ENCODE measurements at regions of chr2 and their contacts with region 1.

Region 1: DNA sequence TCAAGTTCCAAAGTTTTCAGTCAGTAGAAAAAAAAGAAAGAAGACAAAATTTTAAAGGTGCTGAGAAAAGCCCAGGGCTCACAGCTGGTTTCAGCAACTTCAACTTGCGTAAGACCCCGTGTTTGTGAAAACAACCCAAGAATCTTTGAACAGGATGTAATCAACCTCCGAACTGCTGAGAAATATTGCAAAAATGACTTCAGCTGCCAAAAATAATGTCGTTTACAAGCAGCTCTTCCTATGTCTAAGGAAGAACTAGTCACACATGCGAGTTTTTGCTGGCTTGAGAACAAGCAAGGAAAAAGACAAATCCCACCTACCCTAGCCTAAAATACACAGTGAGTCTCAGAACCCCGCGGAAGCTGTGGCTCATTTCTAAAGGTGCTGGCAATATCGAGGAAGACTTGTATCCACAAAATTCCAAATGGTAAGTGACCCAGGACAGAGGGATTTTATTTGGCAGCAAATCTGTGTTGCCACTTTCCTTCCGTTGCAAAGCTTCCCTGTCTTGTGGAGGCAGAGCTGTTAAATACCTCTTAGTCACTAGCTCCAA is 59.8 kb upstream of the SLC8A1 start:
- DNase-seq: peak; percentile 80
- H3K4me3 ChIP-seq: peak overlapping the region; percentile 36 to 54 (median 47)
- H3K27ac ChIP-seq: peak overlapping the region; percentile 75 to 87 (median 80)
- H3K4me1 ChIP-seq: peaks cover 0 to 59% (median 12%) of the 10 kb centered on the region in 4 donors
- H3K27me3 ChIP-seq: no peaks in the 10 kb centered on the region
- CTCF ChIP-seq: no peak
- EP300 ChIP-seq: peak in 1 of 4 donors; percentile 19
- POLR2A ChIP-seq: no peak

Region 2: DNA sequence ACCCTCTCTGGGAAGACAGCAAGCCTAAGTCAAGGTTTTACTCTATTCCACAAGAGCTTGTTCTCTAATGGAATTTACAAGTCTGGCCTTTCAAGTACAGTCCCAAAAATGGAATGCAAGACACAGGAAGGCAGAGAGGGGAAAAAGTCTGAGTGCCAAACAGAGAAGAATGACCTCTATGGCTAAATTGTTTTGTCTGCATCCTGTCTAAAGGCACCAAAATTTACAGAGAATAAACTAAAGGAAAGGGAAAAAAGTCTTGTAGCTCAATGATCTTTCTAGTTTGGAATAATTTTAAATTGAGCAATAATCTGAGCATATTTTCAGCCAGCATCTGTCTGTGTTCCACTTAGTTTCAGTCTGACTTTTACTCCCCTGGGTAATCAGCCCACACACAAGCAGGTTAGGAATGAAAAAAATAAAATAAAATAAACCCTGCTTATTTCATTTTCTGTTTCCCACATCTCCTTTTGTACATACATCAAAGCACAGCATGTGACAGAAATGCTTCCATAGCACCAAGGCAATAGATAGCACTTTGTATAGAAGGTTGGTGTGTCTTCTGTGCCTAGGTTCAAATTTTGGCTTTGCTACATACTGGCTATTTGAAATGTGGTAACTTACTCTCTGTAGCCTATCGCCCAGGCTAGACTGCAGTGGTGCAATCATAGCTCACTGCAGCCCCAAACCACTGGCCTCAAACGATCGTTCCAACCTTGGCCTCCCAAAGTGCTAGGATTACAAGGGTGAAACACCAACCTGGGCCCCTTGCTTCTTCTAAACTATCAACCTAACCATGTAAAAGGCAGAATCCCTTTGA is 165.0 kb before region 1 on chr2:
- intact Hi-C with region 1: no loop called
- DNase-seq: no peak
- H3K4me3 ChIP-seq: no peak overlapping the region
- H3K27ac ChIP-seq: peak overlapping the region; percentile 55 to 85 (median 71)
- H3K4me1 ChIP-seq: peaks cover 0 to 52% (median 41%) of the 10 kb centered on the region in 4 donors
- H3K27me3 ChIP-seq: no peaks in the 10 kb centered on the region
- CTCF ChIP-seq: no peak
- EP300 ChIP-seq: no peak
- POLR2A ChIP-seq: no peak

Region 3: DNA sequence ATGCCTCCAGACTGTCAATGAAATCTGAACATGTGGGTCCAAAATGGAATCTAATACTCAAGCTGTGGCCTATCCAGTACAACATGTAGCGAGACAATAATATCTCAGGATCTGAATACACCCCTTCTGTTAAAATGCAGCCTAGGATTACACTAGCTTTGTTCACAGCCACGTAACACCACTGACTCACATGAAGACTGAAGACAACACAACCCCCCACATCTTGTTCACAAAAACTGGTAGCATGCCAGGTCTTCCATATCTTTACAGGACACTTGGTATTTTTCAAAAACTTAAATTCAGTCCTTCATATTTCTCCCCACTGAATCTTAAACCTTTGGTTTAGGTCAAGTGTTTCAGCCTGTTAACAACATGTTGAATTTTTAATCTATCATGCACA is 144.1 kb before region 1 on chr2:
- intact Hi-C with region 1: loop called (anchors 5 kb)
- DNase-seq: no peak
- H3K4me3 ChIP-seq: no peak overlapping the region
- H3K27ac ChIP-seq: peak overlapping the region in 2 of 4 donors; percentile 75 to 84
- H3K4me1 ChIP-seq: peaks cover 0 to 62% (median 45%) of the 10 kb centered on the region in 4 donors
- H3K27me3 ChIP-seq: no peaks in the 10 kb centered on the region
- CTCF ChIP-seq: no peak
- EP300 ChIP-seq: no peak
- POLR2A ChIP-seq: no peak

Region 4: GRCh38 chr2:40480073-40480472 is 31.7 kb before region 1 on chr2:
- intact Hi-C with region 1: no loop called
- DNase-seq: no peak
- H3K4me3 ChIP-seq: no peak overlapping the region
- H3K27ac ChIP-seq: peak overlapping the region in 2 of 4 donors; percentile 11 to 15
- H3K4me1 ChIP-seq: peaks cover 0 to 18% (median 3%) of the 10 kb centered on the region in 4 donors
- H3K27me3 ChIP-seq: no peaks in the 10 kb centered on the region
- CTCF ChIP-seq: no peak
- EP300 ChIP-seq: no peak
- POLR2A ChIP-seq: no peak

Measured in sigmoid colon (tissue), 7 donors.